HAP-1 (cell line): ENCODE measurements at regions of chr9 and their contacts with region 1.

Region 1: DNA sequence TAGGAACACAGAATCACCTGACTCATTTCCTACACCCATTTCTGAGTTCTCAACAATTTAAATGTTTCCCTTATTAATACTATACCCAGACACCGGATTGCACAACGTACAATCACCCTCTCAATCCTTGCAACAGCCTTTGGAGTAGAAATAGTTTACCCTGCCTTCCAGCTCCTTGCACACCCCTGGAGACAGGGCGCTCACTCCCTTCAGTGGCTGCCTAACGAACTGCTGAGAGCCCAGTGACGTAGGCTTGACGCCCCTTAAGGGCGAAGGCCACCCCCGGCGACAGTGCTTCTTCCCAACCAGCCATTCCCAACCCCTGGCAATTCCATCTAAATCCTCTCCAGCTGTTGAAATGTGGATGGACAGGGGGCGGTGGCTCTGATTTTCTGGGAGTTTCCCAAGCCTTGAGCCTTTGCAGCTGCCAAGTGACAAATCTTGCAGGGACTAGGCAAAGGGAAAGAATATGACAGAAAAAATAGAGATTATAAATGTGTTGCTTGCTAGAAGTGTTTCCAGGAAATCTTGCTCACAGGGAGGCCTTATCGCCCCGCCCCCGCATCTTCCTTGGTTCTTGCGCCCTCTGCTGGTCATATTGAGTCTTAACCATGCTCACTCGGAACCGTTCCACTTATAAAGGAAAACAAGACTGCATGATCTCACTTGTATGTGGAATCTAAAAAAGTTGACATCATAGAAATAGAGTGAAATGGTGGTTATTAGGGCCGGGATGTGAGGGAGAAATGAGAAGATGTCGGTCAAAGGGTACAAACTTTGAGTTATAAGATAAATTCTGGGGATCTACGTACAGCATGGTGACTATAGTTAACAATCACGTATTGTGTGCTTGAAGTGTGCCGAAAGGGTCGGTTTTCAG is 7.6 kb upstream of the BARX1 start:
- DNase-seq: peak; percentile 71 to 88
- H3K4me3 ChIP-seq: no peak overlapping the region
- H3K4me1 ChIP-seq: no peaks in the 10 kb centered on the region; the same call in 1 of the 2 replicates
- H3K27me3 ChIP-seq: peaks cover 4% of the 10 kb centered on the region; the same call in 1 of the 2 replicates

Region 2: GRCh38 chr9:93159601-93160471 is 803.0 kb before region 1 on chr9:
- in situ Hi-C with region 1: loop called (anchors 25 kb)
- DNase-seq: peak; percentile 77 to 93
- H3K4me3 ChIP-seq: no peak overlapping the region
- H3K4me1 ChIP-seq: no peaks in the 10 kb centered on the region
- H3K27me3 ChIP-seq: no peaks in the 10 kb centered on the region

Region 3: DNA sequence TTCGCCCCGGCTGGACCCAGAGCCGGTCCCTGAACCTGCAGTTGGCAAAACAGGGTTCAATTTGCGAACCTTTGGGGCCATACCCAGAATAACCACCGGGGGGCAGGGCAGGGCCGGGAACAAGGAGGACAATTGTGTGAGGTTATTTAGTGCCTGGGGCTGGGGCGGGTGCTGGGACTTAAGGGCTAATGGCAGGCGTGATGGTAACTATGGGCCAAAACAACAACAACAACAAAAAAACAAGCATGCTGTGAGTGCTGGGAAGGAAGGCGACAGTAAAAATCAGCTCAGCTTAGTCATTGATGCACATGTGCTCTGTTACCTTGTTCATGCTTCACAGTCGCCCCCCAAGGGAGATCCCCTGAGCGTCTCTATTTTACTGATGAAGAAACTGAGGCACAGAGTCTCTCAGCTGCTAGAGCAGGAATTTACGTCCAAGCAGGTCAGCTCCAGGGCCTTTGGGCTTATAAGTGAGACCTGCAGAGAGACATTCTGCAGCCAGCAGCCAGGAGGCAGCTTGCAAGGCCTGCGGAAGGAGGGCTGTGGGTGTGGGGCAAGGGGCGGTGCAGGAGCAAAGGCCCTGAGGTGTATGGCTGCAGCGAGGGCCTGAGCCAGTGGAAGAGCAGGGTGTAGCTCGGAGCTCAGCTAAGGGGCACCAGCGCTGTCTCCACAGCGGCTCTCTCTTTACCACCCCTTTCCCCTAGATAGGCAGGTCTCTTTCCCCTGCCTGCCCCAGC is 280.4 kb before region 1 on chr9:
- in situ Hi-C with region 1: loop called (anchors 5 kb)
- DNase-seq: peak; percentile 47 to 91
- H3K4me3 ChIP-seq: no peak overlapping the region
- H3K4me1 ChIP-seq: no peaks in the 10 kb centered on the region
- H3K27me3 ChIP-seq: no peaks in the 10 kb centered on the region

Region 4: DNA sequence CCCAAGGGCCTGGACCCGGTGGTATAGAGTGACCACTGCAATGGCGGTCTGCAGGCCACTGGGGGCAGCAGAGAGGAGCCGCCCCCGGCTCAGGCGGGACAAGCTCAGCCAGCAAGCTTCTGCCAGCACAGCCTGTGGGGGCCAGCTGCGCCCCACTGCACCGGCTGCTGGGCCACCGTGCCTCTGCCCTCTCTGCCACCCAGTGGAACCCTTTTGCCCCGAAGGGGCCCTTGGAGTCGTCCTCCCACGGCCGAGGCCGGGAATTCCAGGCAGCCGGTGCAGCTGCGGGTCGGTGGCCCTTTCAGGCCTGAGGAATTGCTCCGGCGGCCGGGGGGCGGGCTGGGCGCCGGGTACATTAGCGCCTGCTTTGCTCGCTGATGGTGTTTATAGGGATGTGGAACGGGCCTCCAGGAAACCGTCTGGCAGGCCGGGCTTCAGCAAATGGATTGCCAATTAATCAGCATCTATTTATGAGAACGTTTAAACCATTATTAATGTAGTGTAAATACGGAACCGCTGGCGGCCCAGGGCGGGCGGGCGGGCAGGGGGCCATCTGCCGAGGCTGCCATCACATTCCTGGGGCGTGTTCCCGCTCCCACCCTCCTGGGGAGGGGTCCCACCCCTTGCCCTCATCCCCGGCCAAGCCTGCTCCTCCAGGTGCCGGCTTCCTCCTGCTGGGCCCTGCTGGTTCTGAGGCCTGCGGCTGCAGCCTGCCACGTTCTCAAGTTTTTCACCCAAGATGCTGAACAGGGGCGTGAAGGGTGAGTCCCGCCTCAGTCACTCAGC is 135.1 kb before region 1 on chr9:
- in situ Hi-C with region 1: loop called (anchors 10 kb)
- DNase-seq: peak; percentile 28 to 69
- H3K4me3 ChIP-seq: no peak overlapping the region
- H3K4me1 ChIP-seq: no peaks in the 10 kb centered on the region
- H3K27me3 ChIP-seq: no peaks in the 10 kb centered on the region

Region 5: GRCh38 chr9:93893899-93894690 is 68.7 kb before region 1 on chr9:
- in situ Hi-C with region 1: no loop called
- DNase-seq: no peak
- H3K4me3 ChIP-seq: no peak overlapping the region
- H3K4me1 ChIP-seq: no peaks in the 10 kb centered on the region
- H3K27me3 ChIP-seq: no peaks in the 10 kb centered on the region